Caco-2 (cell line): ENCODE measurements at regions of chr16 and their contacts with region 1.

Region 1: GRCh38 chr16:54171626-54172525 is 114.7 kb downstream of the IRX3 start:
- DNase-seq: peak; percentile 69 to 76
- H3K4me3 ChIP-seq: peak overlapping the region; percentile 22
- H3K4me3 Mint-ChIP-seq: peak overlapping the region; percentile 54
- H3K27ac Mint-ChIP-seq: no peak overlapping the region
- H3K4me1 ChIP-seq: peaks cover 48% of the 10 kb centered on the region
- H3K4me1 Mint-ChIP-seq: peaks cover 39% of the 10 kb centered on the region
- H3K27me3 ChIP-seq: no peaks in the 10 kb centered on the region
- H3K27me3 Mint-ChIP-seq: no peaks in the 10 kb centered on the region
- CTCF ChIP-seq: no peak

Region 2: DNA sequence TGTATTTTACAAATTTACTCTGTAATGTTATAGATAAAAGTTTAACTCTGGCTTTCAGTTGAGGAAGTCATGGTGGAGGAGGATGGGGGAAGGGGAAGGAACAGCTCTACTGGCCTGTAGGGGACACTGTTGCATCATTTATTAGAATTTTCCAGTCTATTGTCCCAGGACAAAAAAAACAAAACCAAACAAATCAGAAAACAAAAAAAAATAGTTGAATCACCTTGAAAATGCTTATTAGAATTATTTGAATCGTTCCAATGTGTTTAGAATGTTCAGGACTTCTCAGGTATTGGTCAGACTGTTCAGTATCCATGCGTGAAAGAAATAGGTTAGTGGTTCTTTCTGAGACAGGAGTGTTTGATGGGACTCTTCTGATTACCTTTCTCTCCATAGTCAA is 225.9 kb before region 1 on chr16:
- CTCF ChIA-PET with region 1: no interaction called
- POLR2A ChIA-PET with region 1: no interaction called
- intact Hi-C with region 1: loop called (anchors 1 kb)
- DNase-seq: peak in 1 of 2 experiments; percentile 65
- H3K4me3 ChIP-seq: no peak overlapping the region
- H3K4me3 Mint-ChIP-seq: no peak overlapping the region
- H3K27ac Mint-ChIP-seq: no peak overlapping the region
- H3K4me1 ChIP-seq: peaks cover 14% of the 10 kb centered on the region
- H3K4me1 Mint-ChIP-seq: peaks cover 7% of the 10 kb centered on the region
- H3K27me3 ChIP-seq: no peaks in the 10 kb centered on the region
- H3K27me3 Mint-ChIP-seq: no peaks in the 10 kb centered on the region
- CTCF ChIP-seq: peak; percentile 69 to 87

Region 3: GRCh38 chr16:53991754-53992378 is 180.0 kb before region 1 on chr16:
- CTCF ChIA-PET with region 1: no interaction called
- POLR2A ChIA-PET with region 1: no interaction called
- intact Hi-C with region 1: no loop called
- DNase-seq: no peak
- H3K4me3 ChIP-seq: no peak overlapping the region
- H3K4me3 Mint-ChIP-seq: no peak overlapping the region
- H3K27ac Mint-ChIP-seq: no peak overlapping the region
- H3K4me1 ChIP-seq: no peaks in the 10 kb centered on the region
- H3K4me1 Mint-ChIP-seq: no peaks in the 10 kb centered on the region
- H3K27me3 ChIP-seq: no peaks in the 10 kb centered on the region
- H3K27me3 Mint-ChIP-seq: no peaks in the 10 kb centered on the region
- CTCF ChIP-seq: no peak

Region 4: GRCh38 chr16:54062361-54063278 is 109.3 kb before region 1 on chr16:
- CTCF ChIA-PET with region 1: no interaction called
- POLR2A ChIA-PET with region 1: interaction called, 3 read pairs
- intact Hi-C with region 1: loop called (anchors 2 kb)
- DNase-seq: peak; percentile 45 to 54
- H3K4me3 ChIP-seq: no peak overlapping the region
- H3K4me3 Mint-ChIP-seq: no peak overlapping the region
- H3K27ac Mint-ChIP-seq: peak overlapping the region; percentile 56
- H3K4me1 ChIP-seq: peaks cover 28% of the 10 kb centered on the region
- H3K4me1 Mint-ChIP-seq: peaks cover 43% of the 10 kb centered on the region
- H3K27me3 ChIP-seq: no peaks in the 10 kb centered on the region
- H3K27me3 Mint-ChIP-seq: no peaks in the 10 kb centered on the region
- CTCF ChIP-seq: no peak